Activated T-helper 1 cell treated with anti-CD3 and anti-CD28 coated beads, Interleukin-12 subunit alpha, Interleukin-12 subunit beta, Interleukin-2, Interleukin-4 antibody, amounts not matched to agents 30 ng/mL and 10 ng/mL and 1 ng/mL, durations not matched to agents 14 hours and 24 hours and 36 hours (primary cell): ENCODE measurements at regions of chr12 and their contacts with region 1.

Region 1: DNA sequence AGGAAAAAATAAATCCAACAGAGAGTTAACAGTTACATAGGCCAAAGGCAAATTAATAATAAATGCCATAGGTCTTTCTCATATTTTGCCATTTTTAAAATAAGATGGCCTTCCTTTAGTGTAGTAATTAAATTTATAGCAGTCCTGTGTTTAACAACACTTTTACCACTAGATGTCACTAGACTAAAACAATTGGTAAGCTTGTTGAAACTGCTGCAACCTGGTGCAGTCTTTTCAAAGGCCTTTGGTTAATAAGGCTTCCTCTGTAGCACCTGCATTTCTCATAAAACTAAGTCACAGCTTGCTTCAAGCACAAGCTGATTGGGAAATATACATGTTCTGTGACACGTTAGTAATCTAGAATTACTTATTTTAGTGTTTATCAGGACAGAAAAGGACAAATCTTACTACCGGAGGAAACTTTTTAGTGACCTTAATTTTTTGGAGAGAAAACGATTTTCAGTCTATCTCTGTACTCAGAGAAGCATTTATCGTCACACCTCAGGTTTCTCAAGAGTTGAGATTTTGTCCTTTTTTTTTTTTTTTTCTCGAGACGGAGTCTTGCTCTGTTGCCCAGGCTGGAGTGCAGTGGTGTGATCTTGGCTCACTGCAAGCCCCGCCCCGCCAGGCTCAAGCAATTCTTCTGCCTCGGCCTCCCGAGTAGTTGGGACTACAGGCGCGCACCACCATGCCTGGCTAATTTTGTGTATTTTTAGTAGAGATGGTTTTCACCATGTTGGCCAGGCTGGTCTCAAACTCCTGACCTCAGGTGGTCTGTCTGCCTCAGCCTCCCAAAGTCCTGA is 20.0 kb downstream of the BORCS5 start:
- DNase-seq: peak; percentile 12
- H3K4me3 Mint-ChIP-seq: no peak overlapping the region
- H3K27ac Mint-ChIP-seq: peak overlapping the region; percentile 41
- H3K4me1 Mint-ChIP-seq: peaks cover 39% of the 10 kb centered on the region
- H3K27me3 Mint-ChIP-seq: no peaks in the 10 kb centered on the region

Region 2: GRCh38 chr12:12442548-12443071 is 65.8 kb after region 1 on chr12:
- intact Hi-C with region 1: loop called (anchors 1 kb)
- DNase-seq: no peak
- H3K4me3 Mint-ChIP-seq: peak overlapping the region; percentile 34
- H3K27ac Mint-ChIP-seq: peak overlapping the region; percentile 95
- H3K4me1 Mint-ChIP-seq: peaks cover 74% of the 10 kb centered on the region
- H3K27me3 Mint-ChIP-seq: no peaks in the 10 kb centered on the region

Region 3: DNA sequence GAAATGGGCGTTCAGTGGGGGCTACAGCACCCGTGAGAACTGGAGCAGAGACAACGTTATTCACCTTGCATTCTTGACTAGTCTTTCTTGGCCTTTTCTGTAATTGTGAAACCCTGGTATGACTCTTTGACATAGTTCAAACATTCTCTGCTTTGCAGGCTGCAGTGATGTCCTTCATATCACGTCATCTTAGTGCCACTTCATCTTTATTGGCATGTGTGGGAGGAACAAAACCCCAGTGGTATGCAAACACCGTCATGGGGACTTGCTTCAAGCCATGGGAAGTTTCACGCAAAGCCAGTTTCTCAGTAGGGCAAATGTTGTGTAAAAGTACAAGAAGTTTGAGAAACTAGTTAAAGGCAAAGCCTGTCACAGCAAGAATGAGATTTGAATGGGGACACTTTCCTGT is 206.1 kb after region 1 on chr12:
- intact Hi-C with region 1: no loop called
- DNase-seq: peak; percentile 30
- H3K4me3 Mint-ChIP-seq: peak overlapping the region; percentile 21
- H3K27ac Mint-ChIP-seq: peak overlapping the region; percentile 88
- H3K4me1 Mint-ChIP-seq: peaks cover 45% of the 10 kb centered on the region
- H3K27me3 Mint-ChIP-seq: no peaks in the 10 kb centered on the region

Region 4: DNA sequence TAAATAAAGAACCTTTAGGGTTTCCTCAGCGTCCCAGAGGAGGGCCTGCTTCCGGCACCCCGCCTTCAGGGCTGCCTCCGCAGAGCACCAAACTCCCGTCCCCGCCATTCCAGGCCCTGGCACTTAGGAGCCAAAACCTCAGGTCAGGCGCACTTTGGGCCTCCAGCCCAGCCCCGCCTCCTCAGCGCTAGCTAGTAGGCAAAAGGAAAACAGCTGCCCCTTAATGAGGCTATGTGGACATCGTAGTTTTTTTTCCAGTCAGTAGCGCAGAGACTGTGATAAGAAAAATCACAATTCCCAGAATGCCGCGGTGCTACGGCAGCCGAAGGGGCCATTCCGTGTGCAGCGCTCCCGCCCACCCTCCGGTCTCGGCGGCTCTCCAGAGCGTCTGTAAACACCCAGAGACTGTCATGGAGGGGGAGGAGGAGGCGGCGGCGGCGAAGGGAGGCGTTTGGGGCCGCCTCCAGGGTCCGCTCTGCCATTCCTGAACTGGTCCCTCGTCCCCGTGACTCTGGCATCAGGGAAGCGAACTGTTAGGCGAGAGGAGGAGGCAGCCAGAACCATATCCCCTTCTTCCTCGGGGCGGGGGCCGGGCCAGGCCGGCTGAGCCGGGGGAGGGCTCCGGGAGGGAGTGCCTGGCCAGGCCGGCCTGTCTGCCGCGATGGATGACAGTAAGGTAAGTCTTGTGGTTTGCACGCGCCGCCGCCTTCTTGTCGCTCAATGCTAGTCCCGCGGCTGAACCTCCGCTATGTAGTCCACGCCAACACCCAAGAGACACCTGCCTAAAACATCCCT is 234.9 kb after region 1 on chr12 and contains the start of gene CREBL2:
- intact Hi-C with region 1: loop called (anchors 1 kb)
- DNase-seq: peak; percentile 78
- H3K4me3 Mint-ChIP-seq: peak within 1 kb of the TSS; percentile 95
- H3K27ac Mint-ChIP-seq: peak within 1 kb of the TSS; percentile 96
- H3K4me1 Mint-ChIP-seq: peaks cover 47% of the 10 kb centered on the region
- H3K27me3 Mint-ChIP-seq: no peaks in the 10 kb centered on the region
- total RNA-seq, gene CREBL2: 16.7 and 17.9 TPM in 2 replicates

Region 5: GRCh38 chr12:12696562-12697383 is 319.9 kb after region 1 on chr12:
- intact Hi-C with region 1: loop called (anchors 2 kb)
- DNase-seq: peak; percentile 91
- H3K4me3 Mint-ChIP-seq: peak overlapping the region; percentile 96
- H3K27ac Mint-ChIP-seq: peak overlapping the region; percentile 89
- H3K4me1 Mint-ChIP-seq: peaks cover 49% of the 10 kb centered on the region
- H3K27me3 Mint-ChIP-seq: no peaks in the 10 kb centered on the region

Region 6: DNA sequence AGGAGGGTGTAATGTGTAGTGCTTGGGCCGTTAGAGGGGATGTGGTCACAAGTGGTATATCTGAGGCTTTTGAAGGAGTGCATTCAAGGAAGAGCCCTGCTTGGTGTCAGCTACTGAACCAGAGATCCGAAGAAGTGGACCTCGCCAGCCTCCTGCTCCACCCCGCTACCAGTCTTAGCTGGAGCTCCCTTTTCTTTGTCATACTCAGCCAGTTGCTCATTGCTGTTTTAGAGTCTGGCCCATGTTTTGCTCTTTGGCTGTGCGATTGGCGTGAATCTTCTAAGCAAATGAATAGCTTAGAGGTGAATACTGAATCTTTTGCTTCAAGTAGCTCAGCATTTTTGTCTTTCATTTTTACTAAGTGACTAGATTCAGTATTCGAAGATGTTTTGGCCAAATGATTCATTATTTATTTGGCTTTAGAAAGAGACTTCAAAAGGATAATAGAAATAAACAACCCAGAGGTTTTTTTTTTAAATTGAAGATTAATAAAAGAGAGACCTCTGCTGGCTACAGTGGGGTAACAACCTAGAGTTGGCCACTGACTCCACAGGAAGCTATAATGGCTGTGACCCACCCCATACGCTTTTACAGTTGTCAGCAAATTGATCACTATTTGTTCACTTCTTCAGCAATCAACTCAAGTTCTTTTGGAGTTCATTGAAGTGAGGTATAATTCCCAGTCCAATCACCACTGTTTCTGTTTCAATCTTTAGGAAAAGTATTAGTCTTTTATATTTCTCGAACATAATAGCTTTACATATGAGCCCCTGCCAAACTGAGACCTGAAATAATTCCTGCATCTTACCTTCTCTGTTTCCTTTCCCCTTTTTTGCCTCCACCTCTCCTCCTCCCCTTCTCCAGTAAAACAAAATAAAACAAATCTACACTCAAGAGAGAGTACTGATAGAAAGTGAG is 360.2 kb after region 1 on chr12:
- intact Hi-C with region 1: loop called (anchors 1 kb)
- DNase-seq: peak; percentile 42
- H3K4me3 Mint-ChIP-seq: peak overlapping the region; percentile 74
- H3K27ac Mint-ChIP-seq: peak overlapping the region; percentile 89
- H3K4me1 Mint-ChIP-seq: peaks cover 59% of the 10 kb centered on the region
- H3K27me3 Mint-ChIP-seq: no peaks in the 10 kb centered on the region